ENCODE measurements at regions of chr14 and their contacts with region 1.

Region 1: GRCh38 chr14:35404449-35405303 is at the start of gene NFKBIA:
- DNase-seq: no peak
- H3K4me3 ChIP-seq: peak within 1 kb of the TSS; percentile 92 to 97
- H3K27ac ChIP-seq: peak within 1 kb of the TSS; percentile 100
- H3K4me1 ChIP-seq: peaks cover 60% of the 10 kb centered on the region
- H3K27me3 ChIP-seq: no peaks in the 10 kb centered on the region
- CTCF ChIP-seq: no peak
- POLR2A ChIP-seq: peak in 1 of 2 donors; percentile 99
- total RNA-seq, gene NFKBIA: 1,179 TPM

Region 2: DNA sequence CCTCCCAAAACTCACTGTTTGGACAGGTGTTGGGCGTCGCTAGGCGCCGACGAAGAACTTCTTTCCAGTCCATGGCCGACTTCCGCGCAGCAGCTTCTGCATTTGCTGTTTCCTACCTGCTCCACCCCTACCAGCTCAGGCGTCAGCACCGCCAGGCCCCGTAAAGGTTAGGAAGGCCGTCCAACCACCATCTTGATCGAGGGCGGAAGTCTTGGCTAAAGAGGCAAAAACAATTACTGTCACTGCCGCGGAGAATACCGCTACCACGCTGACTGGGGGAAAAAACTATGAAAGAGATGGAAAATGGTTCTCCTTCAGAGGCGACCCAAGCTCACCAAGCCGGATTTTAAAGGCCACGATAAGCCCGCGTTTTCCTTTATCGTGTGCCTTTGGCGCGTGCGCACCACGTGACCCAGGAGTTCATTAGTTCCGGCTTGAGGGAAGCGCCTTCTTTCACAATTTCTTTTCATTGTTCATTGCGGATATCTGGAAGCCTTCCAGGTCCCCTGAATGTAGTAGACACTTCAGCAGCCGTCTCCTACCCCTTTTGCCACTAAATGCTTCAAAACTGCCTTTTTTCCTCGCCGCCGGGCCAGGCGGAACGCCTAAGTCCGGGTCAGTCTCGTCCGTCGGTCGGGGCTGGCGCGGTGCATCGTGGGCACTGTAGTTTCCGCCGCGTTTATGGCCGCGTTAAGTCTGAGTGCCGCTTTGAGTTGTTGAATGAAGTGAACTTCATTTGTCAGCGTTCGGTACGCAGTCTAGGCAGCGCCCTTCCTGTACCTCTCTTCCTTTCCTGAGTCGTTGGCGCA is 282.6 kb before region 1 on chr14 and contains the starts of genes PPP2R3C and PRORP:
- intact Hi-C with region 1: loop called (anchors 5 kb)
- DNase-seq: peak; percentile 97 to 98
- H3K4me3 ChIP-seq: peak within 1 kb of the TSS; percentile 60 to 67
- H3K27ac ChIP-seq: peak within 1 kb of the TSS; percentile 95
- H3K4me1 ChIP-seq: peaks cover 54% of the 10 kb centered on the region
- H3K27me3 ChIP-seq: no peaks in the 10 kb centered on the region
- CTCF ChIP-seq: no peak
- POLR2A ChIP-seq: peak in 1 of 2 donors; percentile 45
- total RNA-seq, gene PPP2R3C: 14.5 TPM
- total RNA-seq, gene PRORP: 11.0 TPM

Region 3: GRCh38 chr14:35215110-35215876 is 189.4 kb before region 1 on chr14:
- intact Hi-C with region 1: loop called (anchors 5 kb)
- DNase-seq: no peak
- H3K4me3 ChIP-seq: no peak overlapping the region
- H3K27ac ChIP-seq: peak overlapping the region; percentile 33
- H3K4me1 ChIP-seq: peaks cover 16% of the 10 kb centered on the region
- H3K27me3 ChIP-seq: no peaks in the 10 kb centered on the region
- CTCF ChIP-seq: peak in 2 of 3 experiments; percentile 19 to 33
- POLR2A ChIP-seq: no peak

Region 4: DNA sequence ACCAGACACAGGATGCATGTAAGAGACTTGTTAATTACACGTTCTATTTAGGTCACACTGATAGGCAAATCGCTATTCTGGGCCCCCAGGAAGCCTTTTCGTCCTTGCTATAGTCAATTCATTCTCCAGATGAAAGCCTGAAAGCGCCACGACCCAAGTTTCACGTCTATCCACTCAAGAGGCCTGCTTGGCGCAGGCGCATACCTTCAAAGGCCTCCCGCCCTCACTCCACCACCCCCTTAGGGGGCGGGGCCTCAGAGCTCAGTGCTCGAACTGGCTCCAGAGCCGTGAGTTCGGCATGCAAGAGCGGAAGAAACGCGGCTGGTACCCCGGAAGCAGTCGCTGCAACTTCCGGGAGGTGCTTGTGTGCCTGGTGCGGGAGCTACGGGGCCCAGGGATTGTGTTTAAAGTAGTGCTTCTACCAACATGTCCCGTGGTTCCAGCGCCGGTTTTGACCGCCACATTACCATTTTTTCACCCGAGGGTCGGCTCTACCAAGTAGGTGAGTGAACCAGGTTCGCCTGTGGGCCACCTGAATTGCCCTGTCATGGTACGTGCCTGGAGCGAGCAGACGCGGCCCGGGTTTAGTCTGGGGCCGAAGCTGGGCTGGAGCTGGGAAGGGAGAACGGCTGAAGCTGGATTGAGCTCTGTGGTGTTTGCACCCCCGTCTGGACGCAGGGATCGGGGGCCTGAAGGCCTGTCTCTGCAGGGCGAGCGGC is 112.5 kb before region 1 on chr14 and contains the start of gene PSMA6:
- intact Hi-C with region 1: loop called (anchors 5 kb)
- DNase-seq: peak; percentile 98
- H3K4me3 ChIP-seq: peak within 1 kb of the TSS; percentile 90 to 95
- H3K27ac ChIP-seq: peak within 1 kb of the TSS; percentile 88
- H3K4me1 ChIP-seq: peaks cover 51% of the 10 kb centered on the region
- H3K27me3 ChIP-seq: no peaks in the 10 kb centered on the region
- CTCF ChIP-seq: no peak
- POLR2A ChIP-seq: peak in 1 of 2 donors; percentile 21
- total RNA-seq, gene PSMA6: 76.9 TPM

Region 5: GRCh38 chr14:35336494-35337268 is 68.0 kb before region 1 on chr14:
- intact Hi-C with region 1: loop called (anchors 1 kb)
- DNase-seq: peak in 1 of 2 donors; percentile 99
- H3K4me3 ChIP-seq: peak overlapping the region; percentile 3 to 7
- H3K27ac ChIP-seq: peak overlapping the region; percentile 91
- H3K4me1 ChIP-seq: peaks cover 91% of the 10 kb centered on the region
- H3K27me3 ChIP-seq: no peaks in the 10 kb centered on the region
- CTCF ChIP-seq: no peak
- POLR2A ChIP-seq: no peak

Region 6: DNA sequence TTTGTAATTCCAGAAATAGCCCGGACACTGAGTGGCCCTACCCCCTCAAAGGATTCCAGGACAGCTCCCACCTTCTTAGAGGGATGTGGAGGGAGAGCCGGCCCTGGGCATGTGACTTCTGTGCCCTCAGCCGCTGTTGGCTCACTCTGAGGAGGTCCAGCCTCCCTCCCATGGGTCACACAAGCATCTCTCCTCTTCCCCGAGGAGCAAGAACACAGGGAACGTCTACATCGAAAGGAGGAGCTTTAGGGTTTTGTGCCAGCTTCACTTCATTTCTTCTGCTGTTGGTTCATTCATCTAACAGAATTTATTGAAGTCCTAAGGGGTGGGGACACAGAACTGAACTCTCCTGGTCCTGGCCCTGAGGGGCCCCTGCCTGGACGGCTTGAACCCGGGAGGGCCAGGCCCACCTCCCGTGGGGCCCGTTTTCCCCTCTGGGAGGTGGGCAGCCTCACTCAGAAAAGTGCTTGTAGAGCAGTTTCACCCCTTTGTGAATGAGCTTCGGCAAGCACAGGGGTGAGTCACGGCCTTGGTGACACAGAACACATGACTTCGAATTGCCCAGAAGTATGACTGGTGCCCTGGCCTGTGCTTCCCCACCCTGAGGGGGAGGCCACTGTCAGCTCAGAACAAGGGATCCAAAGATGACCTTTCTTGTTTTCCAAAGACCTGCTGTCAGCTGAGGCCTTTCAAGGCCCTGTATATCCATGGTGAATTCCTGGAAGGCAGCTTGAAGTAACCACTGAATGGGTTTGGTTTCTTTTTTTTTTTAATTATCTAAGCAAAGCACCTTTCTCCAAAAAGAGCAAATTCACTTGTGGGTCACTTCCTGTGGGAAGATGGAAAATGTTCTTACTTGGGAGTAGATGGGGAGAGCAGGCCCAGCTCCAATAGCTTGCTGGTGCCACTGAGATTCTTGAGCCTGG is 39.3 kb before region 1 on chr14:
- intact Hi-C with region 1: loop called (anchors 5 kb)
- DNase-seq: peak in 1 of 2 donors; percentile 98
- H3K4me3 ChIP-seq: no peak overlapping the region
- H3K27ac ChIP-seq: peak overlapping the region; percentile 85
- H3K4me1 ChIP-seq: peaks cover 43% of the 10 kb centered on the region
- H3K27me3 ChIP-seq: no peaks in the 10 kb centered on the region
- CTCF ChIP-seq: no peak
- POLR2A ChIP-seq: no peak

Region 7: DNA sequence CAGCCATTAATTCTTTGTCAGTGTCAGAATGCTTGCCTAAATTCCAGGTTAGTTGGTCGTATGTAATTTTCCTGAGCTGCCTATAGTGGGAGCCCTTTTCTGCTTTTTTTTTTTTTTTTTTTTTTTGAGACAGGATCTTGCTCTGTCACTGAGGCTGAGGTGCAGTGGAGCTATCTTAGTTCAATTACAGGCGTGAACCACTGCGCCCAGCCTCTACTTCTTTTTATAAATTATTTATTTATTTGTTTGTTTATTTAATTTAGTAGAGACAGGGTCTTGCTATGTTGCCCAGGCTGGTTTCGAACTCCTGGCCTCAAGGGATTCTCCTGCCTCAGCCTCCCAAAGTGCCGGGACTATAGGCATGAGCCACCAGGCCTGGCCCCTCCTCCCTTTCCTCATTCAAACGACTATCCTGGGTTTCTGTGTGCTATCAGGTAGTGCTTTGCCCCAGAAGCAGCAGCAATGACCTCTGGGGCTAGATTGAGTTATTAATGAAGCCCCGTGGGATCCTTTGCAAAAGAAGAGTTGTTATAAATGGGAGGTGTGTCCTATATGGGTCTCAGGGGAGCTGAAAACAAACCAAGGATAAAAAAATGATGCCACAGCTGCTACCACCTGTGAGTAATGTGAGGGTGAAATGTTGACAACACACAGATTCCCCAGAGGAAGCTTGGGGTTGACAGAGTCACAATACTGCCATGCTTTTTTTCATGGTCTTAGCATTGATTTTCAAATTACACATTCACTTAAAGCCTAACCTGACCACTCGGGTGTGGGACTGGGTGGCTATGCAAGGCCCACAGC is 34.4 kb after region 1 on chr14:
- intact Hi-C with region 1: no loop called
- DNase-seq: no peak
- H3K4me3 ChIP-seq: no peak overlapping the region
- H3K27ac ChIP-seq: no peak overlapping the region
- H3K4me1 ChIP-seq: no peaks in the 10 kb centered on the region
- H3K27me3 ChIP-seq: no peaks in the 10 kb centered on the region
- CTCF ChIP-seq: no peak
- POLR2A ChIP-seq: no peak

Region 8: GRCh38 chr14:35553808-35554207 is 149.1 kb after region 1 on chr14:
- intact Hi-C with region 1: no loop called
- DNase-seq: no peak
- H3K4me3 ChIP-seq: no peak overlapping the region
- H3K27ac ChIP-seq: no peak overlapping the region
- H3K4me1 ChIP-seq: no peaks in the 10 kb centered on the region
- H3K27me3 ChIP-seq: no peaks in the 10 kb centered on the region
- CTCF ChIP-seq: no peak
- POLR2A ChIP-seq: no peak